CD8-positive, alpha-beta T cell (primary cell): ENCODE measurements at regions of chr9 and their contacts with region 1.

Region 1: DNA sequence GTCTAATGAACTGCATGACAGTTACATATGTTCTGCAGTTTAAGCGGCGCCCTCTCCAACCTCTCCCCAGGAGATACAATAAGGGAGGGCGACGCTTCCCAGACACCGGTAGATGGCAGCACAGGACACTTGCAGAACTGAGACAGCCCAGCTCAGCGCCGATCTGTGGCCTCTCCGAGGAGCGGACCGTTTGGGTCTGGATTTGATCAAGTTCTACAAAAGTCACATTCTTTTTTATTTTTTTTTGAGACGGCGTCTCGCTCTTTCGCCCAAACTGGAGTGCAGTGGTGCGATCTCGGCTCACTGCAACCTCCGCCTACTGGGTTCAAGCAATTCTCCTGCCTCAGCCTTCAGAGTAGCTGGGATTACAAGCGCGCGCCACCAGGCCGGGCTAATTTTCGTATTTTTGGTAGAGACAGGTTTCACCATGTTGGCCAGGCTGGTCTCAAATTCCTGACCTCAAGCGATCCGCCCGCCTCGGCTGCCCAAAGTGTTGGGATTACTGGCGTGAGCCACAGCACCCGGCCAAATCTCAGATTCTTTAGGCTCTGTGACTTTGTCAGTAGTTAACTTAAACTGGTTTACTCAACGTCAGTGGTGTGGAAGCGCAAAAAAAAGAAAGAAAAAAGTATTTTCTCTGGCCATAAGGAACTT is 1.4 kb upstream of the ATOSB start:
- DNase-seq: peak; percentile 78 to 96 (median 88)
- ATAC-seq: peak; percentile 65
- H3K4me3 ChIP-seq: peak overlapping the region; percentile 64 to 69
- H3K4me3 Mint-ChIP-seq: peak overlapping the region; percentile 94
- H3K27ac ChIP-seq: peak overlapping the region; percentile 64 to 91
- H3K27ac Mint-ChIP-seq: peak overlapping the region; percentile 94
- H3K4me1 ChIP-seq: peaks cover 34% of the 10 kb centered on the region
- H3K4me1 Mint-ChIP-seq: peaks cover 42% of the 10 kb centered on the region
- H3K27me3 ChIP-seq: peaks cover 0 to 2% of the 10 kb centered on the region in 2 experiments
- H3K27me3 Mint-ChIP-seq: peaks cover 2% of the 10 kb centered on the region
- CTCF ChIP-seq: peak; percentile 95

Region 2: DNA sequence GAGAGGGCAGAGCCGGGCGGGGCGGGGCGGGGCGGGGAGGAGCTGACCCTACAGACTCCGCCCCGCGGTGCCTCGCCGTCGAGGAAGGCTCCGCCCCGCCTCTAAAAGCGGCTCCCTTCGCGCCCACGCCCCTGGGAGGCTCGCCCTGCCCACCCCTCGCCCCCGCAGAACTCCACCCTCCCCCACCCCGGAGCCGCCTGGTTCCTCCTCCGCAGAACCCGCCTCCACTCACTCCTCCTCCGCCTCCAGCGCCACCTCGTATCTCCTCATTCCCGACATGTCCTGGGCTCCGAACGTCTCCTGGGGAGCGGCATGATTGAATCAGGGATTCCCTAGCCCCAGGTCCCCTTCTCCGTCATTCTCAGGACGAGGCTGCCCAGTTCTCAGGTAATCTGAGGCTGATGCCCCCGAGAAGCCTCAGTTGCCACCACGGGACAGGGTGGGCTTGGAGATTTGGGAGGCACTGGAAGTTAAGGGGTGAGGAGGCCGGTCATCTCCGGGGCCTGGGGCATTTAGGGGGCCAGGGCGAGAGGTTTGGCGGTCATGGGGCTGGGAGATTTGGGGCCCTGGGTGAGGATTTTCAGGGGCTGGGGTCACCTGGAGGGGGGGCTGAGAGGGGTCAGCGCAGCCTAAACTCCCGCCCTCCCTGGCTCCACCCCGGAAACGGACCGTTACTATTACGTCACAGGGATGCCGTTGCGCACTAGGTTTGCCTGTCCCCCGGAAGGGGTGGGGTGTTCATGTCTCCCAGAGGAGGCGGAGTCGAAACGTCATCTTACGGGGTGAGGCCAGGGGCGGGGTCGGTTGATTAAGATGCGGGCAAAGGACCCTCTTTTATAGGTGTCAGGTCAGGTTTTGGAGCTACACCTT is 451.4 kb before region 1 on chr9:
- CTCF ChIA-PET with region 1: no interaction called
- POLR2A ChIA-PET with region 1: no interaction called
- intact Hi-C with region 1: loop called in 1 of 2 experiments (anchors 5 kb)
- DNase-seq: peak; percentile 75 to 96 (median 89)
- ATAC-seq: peak; percentile 83
- H3K4me3 ChIP-seq: peak overlapping the region; percentile 86 to 93
- H3K4me3 Mint-ChIP-seq: peak overlapping the region; percentile 92
- H3K27ac ChIP-seq: peak overlapping the region; percentile 96 to 99
- H3K27ac Mint-ChIP-seq: peak overlapping the region; percentile 97
- H3K4me1 ChIP-seq: peaks cover 37% of the 10 kb centered on the region
- H3K4me1 Mint-ChIP-seq: peaks cover 36% of the 10 kb centered on the region
- H3K27me3 ChIP-seq: no peaks in the 10 kb centered on the region
- H3K27me3 Mint-ChIP-seq: no peaks in the 10 kb centered on the region
- CTCF ChIP-seq: no peak

Region 3: DNA sequence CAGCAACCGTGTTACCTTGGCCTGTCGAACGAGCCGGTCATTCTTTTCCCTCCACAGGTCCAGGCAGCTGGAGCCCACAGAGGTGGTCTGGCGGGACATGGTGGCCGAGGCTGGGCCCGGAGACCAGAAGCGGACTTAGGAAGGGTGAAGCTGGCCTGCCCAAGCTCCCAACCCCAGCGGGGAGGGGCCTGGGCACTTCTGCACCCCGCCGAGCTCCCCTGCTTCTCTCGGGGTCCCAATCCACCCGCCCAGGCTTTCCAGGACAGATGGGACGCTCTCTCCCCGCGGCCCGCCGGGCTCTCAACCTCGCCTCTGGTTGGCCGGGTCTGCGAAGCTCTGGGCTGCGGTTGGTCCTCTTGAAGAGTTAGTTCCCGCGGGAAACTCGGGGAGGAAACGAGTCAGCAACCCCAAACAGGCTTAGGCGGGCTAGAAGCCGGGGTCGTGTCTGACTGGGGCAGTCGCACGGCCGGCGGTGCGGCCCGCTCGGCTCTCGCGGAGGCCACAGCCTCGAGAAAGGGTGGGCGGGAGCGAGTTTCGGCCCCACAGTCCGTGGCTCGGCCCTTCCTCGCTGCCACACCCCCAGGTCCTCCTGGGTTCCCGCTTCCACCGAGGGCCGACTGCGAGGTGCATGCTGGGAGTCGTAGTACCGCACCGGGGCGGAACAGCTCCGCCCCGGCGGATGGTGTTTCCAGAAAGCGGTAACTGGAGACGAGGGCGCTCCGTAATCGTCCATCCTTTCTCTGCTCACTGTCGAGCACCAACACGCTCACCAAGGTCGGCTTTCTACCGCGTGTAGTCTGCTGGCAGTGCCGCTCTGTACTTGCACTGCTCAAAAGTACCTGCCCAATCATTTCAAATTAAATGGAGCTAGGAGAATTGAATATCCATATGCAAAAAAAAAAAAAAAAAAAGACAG is 37.3 kb before region 1 on chr9 and contains the start of gene FANCG:
- CTCF ChIA-PET with region 1: interaction called, 4 read pairs
- POLR2A ChIA-PET with region 1: interaction called, 5 read pairs
- intact Hi-C with region 1: loop called in 1 of 2 experiments (anchors 1 kb)
- DNase-seq: peak; percentile 30 to 88 (median 73)
- ATAC-seq: peak; percentile 92
- H3K4me3 ChIP-seq: peak within 1 kb of the TSS; percentile 65 to 81
- H3K4me3 Mint-ChIP-seq: peak within 1 kb of the TSS; percentile 92
- H3K27ac ChIP-seq: peak within 1 kb of the TSS; percentile 42 to 49
- H3K27ac Mint-ChIP-seq: peak within 1 kb of the TSS; percentile 84
- H3K4me1 ChIP-seq: peaks cover 15% of the 10 kb centered on the region
- H3K4me1 Mint-ChIP-seq: peaks cover 21% of the 10 kb centered on the region
- H3K27me3 ChIP-seq: no peaks in the 10 kb centered on the region
- H3K27me3 Mint-ChIP-seq: no peaks in the 10 kb centered on the region
- CTCF ChIP-seq: no peak
- total RNA-seq, gene FANCG: 15.2 to 19.4 TPM

Region 4: DNA sequence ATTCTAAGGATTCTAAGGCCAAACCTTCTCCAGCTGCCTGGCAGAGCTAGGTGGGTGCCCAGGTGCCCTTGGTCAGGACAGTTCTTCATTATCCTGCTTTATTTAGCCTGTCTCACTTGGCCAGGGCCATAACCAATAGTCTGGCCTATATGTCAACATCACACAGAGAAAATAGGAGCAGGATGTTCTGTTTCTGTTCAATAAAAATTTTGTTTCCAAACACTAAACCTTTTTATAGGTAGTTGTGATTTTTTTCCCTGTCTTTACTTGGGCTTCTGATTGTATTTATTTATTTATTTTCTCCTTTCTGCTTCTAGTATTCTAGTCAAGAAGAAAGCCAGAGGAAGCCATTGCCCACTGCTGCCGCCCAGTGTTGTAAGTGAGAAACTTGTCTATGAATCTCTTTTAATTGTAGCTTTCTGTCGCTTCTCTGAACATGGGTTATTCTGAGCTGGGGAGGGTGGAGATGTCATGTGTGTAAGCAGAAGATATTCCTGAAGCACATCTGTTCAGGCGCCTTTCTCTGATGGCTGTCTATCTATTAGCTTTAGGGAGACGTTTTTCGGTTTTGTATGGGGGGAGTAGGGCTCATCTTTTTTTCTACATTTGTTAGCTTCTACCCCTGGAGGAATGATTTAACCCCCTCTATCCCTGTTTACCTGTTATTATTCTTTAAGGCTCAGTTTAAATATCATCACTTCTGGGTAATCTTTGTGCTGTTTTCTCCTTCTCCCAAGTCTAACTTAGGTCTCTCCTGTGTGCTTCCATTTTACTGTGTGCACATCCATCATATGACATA is 141.8 kb after region 1 on chr9:
- CTCF ChIA-PET with region 1: interaction called, 37 read pairs
- POLR2A ChIA-PET with region 1: interaction called, 5 read pairs
- intact Hi-C with region 1: loop called (anchors 1 kb)
- DNase-seq: peak in 8 of 9 experiments; percentile 7 to 62 (median 45)
- ATAC-seq: no peak
- H3K4me3 ChIP-seq: no peak overlapping the region
- H3K4me3 Mint-ChIP-seq: no peak overlapping the region
- H3K27ac ChIP-seq: no peak overlapping the region
- H3K27ac Mint-ChIP-seq: no peak overlapping the region
- H3K4me1 ChIP-seq: no peaks in the 10 kb centered on the region
- H3K4me1 Mint-ChIP-seq: no peaks in the 10 kb centered on the region
- H3K27me3 ChIP-seq: no peaks in the 10 kb centered on the region
- H3K27me3 Mint-ChIP-seq: peaks cover 8% of the 10 kb centered on the region
- CTCF ChIP-seq: peak; percentile 57

Region 5: DNA sequence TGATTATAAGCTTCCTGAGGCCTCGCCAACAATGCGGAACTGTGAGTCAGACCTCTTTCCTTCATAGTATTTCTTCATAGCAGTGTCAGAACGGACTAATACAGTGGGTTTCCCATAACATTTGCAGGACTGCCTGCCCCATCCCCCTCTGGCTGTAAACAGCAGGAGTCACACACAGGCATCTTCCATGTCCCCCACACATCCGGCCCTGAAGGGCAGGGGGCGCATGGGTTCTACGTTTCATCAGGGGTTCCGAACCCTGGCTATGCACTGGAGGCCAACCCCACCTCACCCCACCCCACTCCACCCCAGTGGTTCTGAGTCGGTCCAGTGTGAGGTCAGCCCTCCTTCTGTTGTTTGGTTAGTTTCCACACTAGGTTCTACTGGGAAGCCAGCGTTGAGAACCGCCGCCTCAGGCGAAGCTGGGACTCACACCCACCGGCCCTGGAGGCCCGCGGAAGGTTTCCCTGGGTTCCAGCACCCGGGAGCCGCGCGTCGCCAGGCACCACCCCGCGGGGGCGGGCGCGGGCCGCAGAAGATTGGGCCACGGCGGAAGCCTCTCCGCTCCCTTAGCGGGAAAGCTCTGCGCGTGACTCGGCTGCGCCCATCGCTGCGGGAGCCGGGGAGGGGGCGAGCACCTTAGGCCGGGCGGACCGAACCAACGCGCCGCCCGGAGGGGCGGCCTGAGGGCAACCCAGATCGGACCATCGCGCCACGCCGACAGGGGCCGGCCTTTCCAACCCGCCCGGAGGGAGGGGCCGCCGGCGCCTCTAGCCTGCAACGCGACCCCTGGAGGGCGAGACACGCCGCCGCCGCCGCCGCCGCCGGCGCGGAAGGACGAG is 372.5 kb after region 1 on chr9 and contains the start of gene RUSC2:
- CTCF ChIA-PET with region 1: no interaction called
- POLR2A ChIA-PET with region 1: no interaction called
- intact Hi-C with region 1: loop called in 1 of 2 experiments (anchors 1 kb)
- DNase-seq: peak in 8 of 9 experiments; percentile 8 to 70 (median 38)
- ATAC-seq: peak; percentile 65
- H3K4me3 ChIP-seq: peak within 1 kb of the TSS; percentile 39 to 55
- H3K4me3 Mint-ChIP-seq: peak within 1 kb of the TSS; percentile 81
- H3K27ac ChIP-seq: no peak within 1 kb of the TSS
- H3K27ac Mint-ChIP-seq: peak within 1 kb of the TSS; percentile 35
- H3K4me1 ChIP-seq: peaks cover 9% of the 10 kb centered on the region
- H3K4me1 Mint-ChIP-seq: peaks cover 19% of the 10 kb centered on the region
- H3K27me3 ChIP-seq: peaks cover 0 to 8% of the 10 kb centered on the region in 2 experiments
- H3K27me3 Mint-ChIP-seq: peaks cover 15% of the 10 kb centered on the region
- CTCF ChIP-seq: no peak
- total RNA-seq, gene RUSC2: 0.22 to 0.36 TPM

Region 6: DNA sequence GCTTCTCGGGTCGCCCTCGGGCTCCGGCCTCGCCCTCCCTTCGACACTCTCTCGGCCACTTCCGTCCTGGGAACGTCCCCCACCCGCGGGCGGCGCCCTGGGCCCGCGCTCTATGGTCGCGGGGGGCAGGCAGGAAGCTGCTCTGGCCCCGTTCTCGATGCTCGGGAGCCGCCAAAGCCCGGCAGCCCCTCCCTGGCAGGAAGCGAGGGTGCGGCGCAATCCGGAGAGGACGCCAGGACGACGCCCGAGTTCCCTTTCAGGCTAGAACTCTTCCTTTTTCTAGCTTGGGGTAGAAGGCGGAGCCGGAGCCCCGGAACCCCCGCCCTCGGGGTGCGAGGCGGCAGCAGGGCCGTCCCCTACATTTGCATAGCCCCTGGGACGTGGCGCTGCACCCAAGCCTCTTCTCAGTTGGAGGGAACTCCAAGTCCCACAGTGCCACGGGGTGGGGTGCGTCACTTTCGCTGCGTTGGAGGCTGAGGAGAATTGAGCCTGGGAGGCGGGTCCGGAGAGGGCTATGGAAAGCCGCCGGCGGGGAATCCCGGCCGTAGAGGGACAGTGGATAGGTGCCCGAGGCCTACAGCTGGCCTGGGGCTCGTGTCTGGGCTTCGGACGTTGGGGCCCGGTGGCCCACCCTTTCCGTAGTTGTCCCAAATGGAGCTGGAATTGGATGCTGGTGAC is 615.2 kb after region 1 on chr9 and contains the starts of genes CREB3 and TLN1:
- CTCF ChIA-PET with region 1: no interaction called
- POLR2A ChIA-PET with region 1: no interaction called
- intact Hi-C with region 1: loop called in 1 of 2 experiments (anchors 2 kb)
- DNase-seq: peak; percentile 92 to 98 (median 96)
- ATAC-seq: peak; percentile 91
- H3K4me3 ChIP-seq: peak within 1 kb of the TSS; percentile 91 to 99
- H3K4me3 Mint-ChIP-seq: peak within 1 kb of the TSS; percentile 93
- H3K27ac ChIP-seq: peak within 1 kb of the TSS; percentile 84 to 96
- H3K27ac Mint-ChIP-seq: peak within 1 kb of the TSS; percentile 88
- H3K4me1 ChIP-seq: peaks cover 62% of the 10 kb centered on the region
- H3K4me1 Mint-ChIP-seq: peaks cover 24% of the 10 kb centered on the region
- H3K27me3 ChIP-seq: no peaks in the 10 kb centered on the region
- H3K27me3 Mint-ChIP-seq: no peaks in the 10 kb centered on the region
- CTCF ChIP-seq: no peak
- total RNA-seq, gene CREB3: 13.1 to 14.2 TPM
- total RNA-seq, gene TLN1: 128 to 129 TPM

Region 7: GRCh38 chr9:36765468-36766341 is 1648.7 kb after region 1 on chr9:
- CTCF ChIA-PET with region 1: no interaction called
- POLR2A ChIA-PET with region 1: no interaction called
- intact Hi-C with region 1: loop called in 1 of 2 experiments (anchors 10 kb)
- DNase-seq: peak; percentile 68 to 95 (median 89)
- ATAC-seq: peak; percentile 99
- H3K4me3 ChIP-seq: peak overlapping the region; percentile 47 to 54
- H3K4me3 Mint-ChIP-seq: no peak overlapping the region
- H3K27ac ChIP-seq: peak overlapping the region; percentile 23 to 39
- H3K27ac Mint-ChIP-seq: peak overlapping the region; percentile 71
- H3K4me1 ChIP-seq: peaks cover 6% of the 10 kb centered on the region
- H3K4me1 Mint-ChIP-seq: peaks cover 6% of the 10 kb centered on the region
- H3K27me3 ChIP-seq: peaks cover 0 to 7% of the 10 kb centered on the region in 2 experiments
- H3K27me3 Mint-ChIP-seq: peaks cover 5% of the 10 kb centered on the region
- CTCF ChIP-seq: no peak